H1 (cell line): ENCODE measurements at regions of chr12 and their contacts with region 1.

Region 1: DNA sequence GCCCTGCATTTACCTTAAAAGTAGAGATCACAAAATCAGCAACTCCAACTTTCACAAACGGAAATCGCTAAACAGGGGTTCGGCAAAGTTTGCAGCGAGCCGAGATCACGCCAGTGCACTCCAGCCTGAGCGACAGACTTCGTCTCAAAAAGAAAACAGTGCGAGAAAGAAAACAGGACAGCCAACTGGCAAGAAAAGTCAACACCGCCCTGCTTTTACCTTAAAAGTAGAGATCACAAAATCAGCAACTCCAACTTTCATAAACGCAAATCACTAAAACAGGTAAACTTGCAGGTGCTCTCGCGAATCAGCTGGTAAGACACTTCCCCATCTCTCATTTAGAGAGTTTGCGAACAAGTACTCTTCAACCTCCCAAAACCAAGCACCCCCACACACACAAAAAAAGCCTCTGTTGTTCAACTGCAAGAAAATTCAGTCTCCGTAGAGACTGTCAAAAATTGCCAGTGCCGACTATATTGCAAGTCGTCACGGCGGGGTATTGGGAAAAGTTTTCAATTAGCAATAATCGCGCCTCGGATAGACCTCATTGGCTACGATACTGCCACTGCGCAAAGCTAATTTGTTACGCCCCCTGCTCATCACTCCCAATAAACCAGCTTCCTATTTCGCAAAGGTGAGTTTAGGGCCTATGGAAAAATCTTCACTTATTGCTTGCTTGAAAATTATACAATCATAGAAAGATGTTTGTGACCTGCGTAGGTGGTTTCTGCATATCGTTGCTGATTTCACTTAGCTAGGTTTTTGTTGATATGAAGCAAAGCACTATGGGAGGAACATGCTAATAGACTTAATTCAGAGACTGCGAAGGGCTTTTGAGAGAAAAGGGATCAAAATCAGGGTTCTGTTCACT is at the start of gene RNU4-1:
- DNase-seq: peak; percentile 75 to 80
- H3K4me3 ChIP-seq: peak within 1 kb of the TSS; percentile 72 to 91 (median 73)
- H3K27ac ChIP-seq: peak within 1 kb of the TSS; percentile 100
- H3K4me1 ChIP-seq: peaks cover 4% of the 10 kb centered on the region in 4 experiments; a peak in 6 of 7 replicates
- H3K27me3 ChIP-seq: no peaks in the 10 kb centered on the region
- CTCF ChIP-seq: no peak
- EP300 ChIP-seq: peak in 1 of 2 experiments; percentile 22; a peak in 1 of 3 replicates
- POLR2A ChIP-seq: peak; percentile 100
- RAD21 ChIP-seq: no peak
- total RNA-seq, gene RNU4-1: 1,424 and 1,786 TPM in 2 replicates

Region 2: GRCh38 chr12:120086801-120087621 is 205.9 kb before region 1 on chr12:
- CTCF ChIA-PET with region 1: interaction called, 3 read pairs
- POLR2A ChIA-PET with region 1: interaction called, 11 read pairs
- DNase-seq: peak; percentile 100
- H3K4me3 ChIP-seq: peak overlapping the region; percentile 17 to 57 (median 38); a peak in 7 of 8 replicates
- H3K27ac ChIP-seq: peak overlapping the region; percentile 59
- H3K4me1 ChIP-seq: peaks cover 9 to 21% (median 12%) of the 10 kb centered on the region in 4 experiments
- H3K27me3 ChIP-seq: no peaks in the 10 kb centered on the region
- CTCF ChIP-seq: peak; percentile 90 to 96 (median 92)
- EP300 ChIP-seq: peak in 1 of 2 experiments; percentile 97; a peak in 2 of 3 replicates
- POLR2A ChIP-seq: peak; percentile 52 to 79
- RAD21 ChIP-seq: peak; percentile 62 to 79

Region 3: GRCh38 chr12:120234643-120235368 is 58.1 kb before region 1 on chr12:
- CTCF ChIA-PET with region 1: interaction called, 148 read pairs
- POLR2A ChIA-PET with region 1: interaction called, 4,270 read pairs
- DNase-seq: no peak
- H3K4me3 ChIP-seq: no peak overlapping the region
- H3K27ac ChIP-seq: no peak overlapping the region
- H3K4me1 ChIP-seq: peaks cover 34 to 57% (median 38%) of the 10 kb centered on the region in 4 experiments
- H3K27me3 ChIP-seq: no peaks in the 10 kb centered on the region
- CTCF ChIP-seq: peak; percentile 57 to 67 (median 57)
- EP300 ChIP-seq: no peak
- POLR2A ChIP-seq: no peak
- RAD21 ChIP-seq: peak; percentile 38 to 46; a peak in 3 of 4 replicates

Region 4: GRCh38 chr12:120317224-120318105 is 24.6 kb after region 1 on chr12:
- CTCF ChIA-PET with region 1: interaction called, 26 read pairs
- POLR2A ChIA-PET with region 1: interaction called, 102 read pairs
- DNase-seq: peak; percentile 97 to 100
- H3K4me3 ChIP-seq: peak overlapping the region; percentile 33 to 67 (median 56)
- H3K27ac ChIP-seq: peak overlapping the region; percentile 68; the same call in 1 of the 2 replicates
- H3K4me1 ChIP-seq: peaks cover 0 to 8% (median 4%) of the 10 kb centered on the region in 4 experiments; a peak in 3 of 7 replicates
- H3K27me3 ChIP-seq: no peaks in the 10 kb centered on the region
- CTCF ChIP-seq: peak; percentile 28 to 63 (median 45)
- EP300 ChIP-seq: no peak
- POLR2A ChIP-seq: peak in 1 of 2 experiments; percentile 78; a peak in 1 of 3 replicates
- RAD21 ChIP-seq: peak; percentile 23; a peak in 2 of 4 replicates

Region 5: DNA sequence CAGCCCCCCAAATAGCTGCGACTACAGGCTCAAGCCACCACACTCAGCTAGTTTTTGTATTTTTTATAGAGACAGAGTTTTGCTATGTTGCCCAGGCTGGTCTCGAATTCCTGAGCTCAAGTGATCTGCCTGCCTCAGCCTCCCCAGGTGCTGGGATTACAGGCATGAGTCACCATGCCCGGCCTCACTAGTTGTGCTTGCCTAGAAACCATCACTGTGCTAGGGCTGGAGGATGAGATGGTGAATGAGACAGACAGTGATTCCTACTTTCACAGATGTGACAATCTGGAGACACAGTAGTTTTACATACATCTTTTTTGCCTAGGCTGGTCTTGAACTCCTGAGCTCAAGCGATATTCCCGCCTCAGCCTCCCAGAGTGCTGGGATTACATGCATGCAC is 83.5 kb after region 1 on chr12:
- CTCF ChIA-PET with region 1: no interaction called
- POLR2A ChIA-PET with region 1: interaction called, 16 read pairs
- DNase-seq: no peak
- H3K4me3 ChIP-seq: no peak overlapping the region
- H3K27ac ChIP-seq: no peak overlapping the region
- H3K4me1 ChIP-seq: peaks cover 0 to 14% (median 8%) of the 10 kb centered on the region in 4 experiments
- H3K27me3 ChIP-seq: peaks cover 0 to 2% (median 1%) of the 10 kb centered on the region in 4 experiments; a peak in 4 of 7 replicates
- CTCF ChIP-seq: no peak
- EP300 ChIP-seq: no peak
- POLR2A ChIP-seq: no peak
- RAD21 ChIP-seq: no peak

Region 6: GRCh38 chr12:120437754-120438494 is 145.0 kb after region 1 on chr12 and contains the start of gene COX6A1:
- CTCF ChIA-PET with region 1: no interaction called
- POLR2A ChIA-PET with region 1: interaction called, 13 read pairs
- DNase-seq: peak; percentile 94 to 98
- H3K4me3 ChIP-seq: peak within 1 kb of the TSS; percentile 81 to 92 (median 90)
- H3K27ac ChIP-seq: peak within 1 kb of the TSS; percentile 58; the same call in 1 of the 2 replicates
- H3K4me1 ChIP-seq: peaks cover 0 to 2% (median under 1%) of the 10 kb centered on the region in 4 experiments; a peak in 1 of 7 replicates
- H3K27me3 ChIP-seq: no peaks in the 10 kb centered on the region
- CTCF ChIP-seq: peak; percentile 25 to 31 (median 28); a peak in 3 of 4 replicates
- EP300 ChIP-seq: no peak
- POLR2A ChIP-seq: peak; percentile 35 to 82
- RAD21 ChIP-seq: peak in 1 of 2 experiments; percentile 9; a peak in 2 of 4 replicates
- total RNA-seq, gene COX6A1: 437 and 465 TPM in 2 replicates